A549 (cell line): ENCODE measurements at regions of chr19 and their contacts with region 1.

Region 1: DNA sequence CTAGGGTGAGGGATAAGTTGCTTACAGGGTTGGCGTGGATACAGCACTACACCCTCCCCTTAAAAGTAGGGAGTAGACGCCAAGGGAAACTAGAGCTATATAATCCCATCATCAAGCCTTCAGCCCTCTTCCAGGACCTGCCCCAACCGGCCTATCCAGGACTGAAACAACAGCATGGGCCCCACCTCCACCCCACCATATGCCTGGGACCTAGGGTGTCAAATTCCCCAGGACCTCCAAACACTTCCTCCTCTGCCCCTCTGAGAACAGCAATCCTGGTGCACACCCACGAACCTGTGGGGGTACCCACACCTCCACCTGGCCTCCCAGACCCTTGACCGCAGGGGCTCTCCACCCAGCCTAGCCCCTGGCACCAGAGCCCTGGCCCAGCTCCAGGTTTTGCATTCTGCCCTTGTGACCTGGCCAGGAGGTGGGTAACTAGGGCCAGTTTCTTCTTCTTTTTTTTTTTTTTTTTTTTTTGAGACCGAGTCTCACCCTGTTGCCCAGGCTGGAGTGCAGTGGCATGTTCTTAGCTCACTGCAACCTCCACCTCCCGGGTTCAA is 1.4 kb upstream of the CYP2F1 start:
- DNase-seq: no peak
- ATAC-seq: no peak
- H3K4me3 ChIP-seq: no peak overlapping the region
- H3K27ac ChIP-seq: no peak overlapping the region
- H3K4me1 ChIP-seq: no peaks in the 10 kb centered on the region
- CTCF ChIP-seq: no peak
- EP300 ChIP-seq: no peak
- POLR2A ChIP-seq: no peak
- RAD21 ChIP-seq: no peak

Region 2: GRCh38 chr19:41123716-41124294 is 11.0 kb after region 1 on chr19:
- CTCF ChIA-PET with region 1: interaction called, 21 read pairs
- POLR2A ChIA-PET with region 1: no interaction called
- DNase-seq: no peak
- ATAC-seq: no peak
- H3K4me3 ChIP-seq: no peak overlapping the region
- H3K27ac ChIP-seq: no peak overlapping the region
- H3K4me1 ChIP-seq: peaks cover 10% of the 10 kb centered on the region
- CTCF ChIP-seq: no peak
- EP300 ChIP-seq: no peak
- POLR2A ChIP-seq: no peak
- RAD21 ChIP-seq: no peak

Region 3: DNA sequence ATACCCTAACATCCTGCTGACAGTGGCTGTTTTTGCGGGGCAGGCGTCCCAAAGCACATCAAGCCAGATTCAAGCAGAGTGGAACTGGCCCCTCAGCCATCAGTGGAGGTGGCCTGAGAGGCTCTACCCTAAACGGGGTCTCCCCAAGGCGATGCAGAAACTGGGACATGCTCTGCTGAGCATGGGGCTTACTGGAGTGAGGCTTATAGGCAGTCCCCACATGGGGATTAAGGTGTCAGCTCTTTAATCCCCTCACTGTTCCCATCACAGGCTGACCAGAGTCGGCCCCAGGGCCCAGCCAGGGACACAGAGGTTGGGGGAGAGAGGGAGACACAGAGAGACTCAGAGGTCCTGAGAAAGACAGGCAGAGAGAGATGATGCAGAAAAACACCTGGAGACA is 18.4 kb after region 1 on chr19:
- CTCF ChIA-PET with region 1: interaction called, 21 read pairs
- POLR2A ChIA-PET with region 1: no interaction called
- DNase-seq: no peak
- ATAC-seq: no peak
- H3K4me3 ChIP-seq: no peak overlapping the region
- H3K27ac ChIP-seq: no peak overlapping the region; a peak in 1 of 6 replicates
- H3K4me1 ChIP-seq: peaks cover 15% of the 10 kb centered on the region
- CTCF ChIP-seq: no peak
- EP300 ChIP-seq: no peak
- POLR2A ChIP-seq: no peak
- RAD21 ChIP-seq: no peak

Region 4: GRCh38 chr19:41172297-41173164 is 59.7 kb after region 1 on chr19:
- CTCF ChIA-PET with region 1: no interaction called
- POLR2A ChIA-PET with region 1: no interaction called
- DNase-seq: no peak
- ATAC-seq: no peak
- H3K4me3 ChIP-seq: no peak overlapping the region
- H3K27ac ChIP-seq: peak overlapping the region in 1 of 2 experiments; percentile 87; a peak in 4 of 6 replicates
- H3K4me1 ChIP-seq: peaks cover 35% of the 10 kb centered on the region
- CTCF ChIP-seq: peak; percentile 40
- EP300 ChIP-seq: no peak
- POLR2A ChIP-seq: no peak
- RAD21 ChIP-seq: peak; percentile 24 to 35; a peak in 3 of 5 replicates